ENCODE measurements at regions of chr1 and their contacts with region 1.

Region 1: DNA sequence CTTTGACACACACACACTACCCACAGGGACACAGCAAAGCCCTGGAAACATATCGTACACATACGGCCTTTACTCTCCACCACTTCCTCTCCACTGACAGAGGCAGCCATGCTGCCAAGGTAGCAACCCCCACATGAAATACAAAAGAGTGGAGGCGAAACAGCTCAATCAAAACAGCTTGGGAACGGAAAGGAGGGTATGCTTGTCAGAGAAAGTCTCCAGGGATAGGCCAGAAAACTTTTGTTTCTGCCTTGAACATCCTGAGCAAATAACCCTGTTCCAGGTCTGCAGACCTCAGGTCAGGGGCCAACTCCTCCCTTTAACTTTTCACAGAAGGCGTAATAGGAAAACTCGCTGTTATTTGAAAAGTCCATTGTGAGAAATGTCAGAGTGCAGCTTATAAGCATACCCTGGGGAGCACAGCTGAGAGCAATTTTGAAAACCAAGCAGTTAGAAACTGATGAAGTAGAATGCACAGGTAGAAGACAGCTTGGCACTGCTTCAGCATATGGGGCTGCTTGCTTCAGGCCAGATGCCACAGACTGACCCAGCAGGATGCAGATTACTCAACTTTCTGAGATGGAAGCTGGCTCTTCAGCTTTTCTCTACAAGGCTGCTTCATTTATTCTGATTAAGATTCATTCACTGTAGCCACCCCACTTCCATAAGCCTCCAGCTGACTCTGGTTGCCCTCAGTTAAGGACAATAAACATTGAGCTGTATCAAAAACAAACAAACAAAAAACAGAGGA is 18.0 kb downstream of the KIAA0319L start:
- DNase-seq: peak; percentile 75
- ATAC-seq: peak; percentile 73
- H3K4me3 ChIP-seq: peak overlapping the region; percentile 39
- H3K27ac ChIP-seq: peak overlapping the region; percentile 87
- H3K4me1 ChIP-seq: peaks cover 27% of the 10 kb centered on the region
- H3K27me3 ChIP-seq: no peaks in the 10 kb centered on the region
- CTCF ChIP-seq: no peak
- EP300 ChIP-seq: no peak
- POLR2A ChIP-seq: peak; percentile 41
- RAD21 ChIP-seq: no peak

Region 2: DNA sequence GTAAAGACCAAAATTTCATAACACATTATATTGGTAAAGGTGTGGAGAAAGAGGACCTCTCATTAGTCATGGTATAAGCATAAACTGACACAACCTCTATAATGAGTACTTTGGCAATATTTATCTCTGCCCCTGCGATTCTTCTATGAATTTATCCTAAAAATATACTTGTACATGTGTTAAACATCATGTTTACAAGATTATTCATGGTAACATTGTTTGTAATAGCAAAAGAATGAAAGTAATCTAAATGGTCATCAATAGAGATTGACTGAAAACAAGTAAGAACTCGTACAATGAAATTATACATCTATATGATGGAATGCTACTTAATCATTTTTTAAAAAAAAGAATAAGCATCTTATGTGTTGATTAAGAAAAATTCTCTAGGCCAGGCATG is 78.5 kb before region 1 on chr1:
- CTCF ChIA-PET with region 1: interaction called, 260 read pairs
- POLR2A ChIA-PET with region 1: interaction called, 9 read pairs
- RAD21 ChIA-PET with region 1: interaction called, 20 read pairs
- SMC1A ChIA-PET with region 1: interaction called, 254 read pairs
- in situ Hi-C with region 1: no loop called
- intact Hi-C with region 1: no loop called
- DNase-seq: no peak
- ATAC-seq: no peak
- H3K4me3 ChIP-seq: no peak overlapping the region
- H3K27ac ChIP-seq: no peak overlapping the region
- H3K4me1 ChIP-seq: peaks cover 16% of the 10 kb centered on the region
- H3K27me3 ChIP-seq: no peaks in the 10 kb centered on the region
- CTCF ChIP-seq: no peak
- EP300 ChIP-seq: no peak
- POLR2A ChIP-seq: no peak
- RAD21 ChIP-seq: no peak

Region 3: GRCh38 chr1:35615440-35615839 is 76.2 kb after region 1 on chr1:
- CTCF ChIA-PET with region 1: no interaction called
- POLR2A ChIA-PET with region 1: no interaction called
- RAD21 ChIA-PET with region 1: no interaction called
- SMC1A ChIA-PET with region 1: no interaction called
- in situ Hi-C with region 1: no loop called
- intact Hi-C with region 1: no loop called
- DNase-seq: no peak
- ATAC-seq: no peak
- H3K4me3 ChIP-seq: no peak overlapping the region
- H3K27ac ChIP-seq: no peak overlapping the region
- H3K4me1 ChIP-seq: peaks cover 7% of the 10 kb centered on the region; the same call in 1 of the 2 replicates
- H3K27me3 ChIP-seq: no peaks in the 10 kb centered on the region
- CTCF ChIP-seq: no peak
- EP300 ChIP-seq: no peak
- POLR2A ChIP-seq: no peak
- RAD21 ChIP-seq: no peak